Caco-2 (cell line): ENCODE measurements at regions of chr7 and their contacts with region 1.

Region 1: GRCh38 chr7:36440880-36441279 is 51.2 kb downstream of the ANLN start:
- DNase-seq: peak in 1 of 2 experiments; percentile 24
- H3K4me3 ChIP-seq: no peak overlapping the region
- H3K4me3 Mint-ChIP-seq: no peak overlapping the region
- H3K27ac Mint-ChIP-seq: no peak overlapping the region
- H3K4me1 ChIP-seq: peaks cover 13% of the 10 kb centered on the region
- H3K4me1 Mint-ChIP-seq: no peaks in the 10 kb centered on the region
- H3K27me3 ChIP-seq: no peaks in the 10 kb centered on the region
- H3K27me3 Mint-ChIP-seq: no peaks in the 10 kb centered on the region
- CTCF ChIP-seq: peak; percentile 36 to 42

Region 2: DNA sequence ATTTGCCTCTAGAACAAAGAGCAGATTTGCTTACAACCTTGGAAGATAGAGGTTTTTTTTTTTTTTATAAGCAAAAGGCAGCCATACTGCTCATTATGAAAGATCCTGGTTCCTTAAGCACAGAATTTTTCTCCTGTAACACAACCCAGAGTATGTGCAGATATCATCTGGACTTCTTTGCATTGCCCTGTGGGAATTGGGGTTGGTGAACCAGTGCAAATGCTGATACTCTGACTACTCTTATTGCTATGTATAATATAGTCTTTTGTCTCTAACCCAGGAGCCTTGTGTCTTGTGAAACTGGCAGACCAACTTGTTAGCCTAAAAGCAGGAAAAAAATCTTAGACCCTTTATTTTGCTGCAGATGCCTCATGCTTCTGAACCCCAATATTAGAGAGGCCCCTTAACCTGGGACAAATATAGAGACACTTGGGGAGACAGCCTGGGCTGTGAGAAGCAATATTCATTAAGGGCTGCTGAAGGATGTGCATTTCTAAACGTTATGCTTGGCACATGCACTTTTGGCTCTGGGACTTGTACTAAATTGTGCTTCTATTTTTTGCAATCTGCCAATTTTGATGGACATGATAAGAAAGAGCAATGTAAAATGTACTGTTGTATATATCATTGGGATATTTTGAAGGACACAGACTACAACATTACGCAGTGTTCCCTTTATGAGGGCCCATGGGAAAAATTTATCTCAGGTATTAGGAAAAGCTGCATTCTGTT is 27.7 kb after region 1 on chr7:
- CTCF ChIA-PET with region 1: no interaction called
- POLR2A ChIA-PET with region 1: no interaction called
- intact Hi-C with region 1: no loop called
- DNase-seq: no peak
- H3K4me3 ChIP-seq: no peak overlapping the region
- H3K4me3 Mint-ChIP-seq: no peak overlapping the region
- H3K27ac Mint-ChIP-seq: no peak overlapping the region
- H3K4me1 ChIP-seq: no peaks in the 10 kb centered on the region
- H3K4me1 Mint-ChIP-seq: no peaks in the 10 kb centered on the region
- H3K27me3 ChIP-seq: no peaks in the 10 kb centered on the region
- H3K27me3 Mint-ChIP-seq: no peaks in the 10 kb centered on the region
- CTCF ChIP-seq: no peak

Region 3: DNA sequence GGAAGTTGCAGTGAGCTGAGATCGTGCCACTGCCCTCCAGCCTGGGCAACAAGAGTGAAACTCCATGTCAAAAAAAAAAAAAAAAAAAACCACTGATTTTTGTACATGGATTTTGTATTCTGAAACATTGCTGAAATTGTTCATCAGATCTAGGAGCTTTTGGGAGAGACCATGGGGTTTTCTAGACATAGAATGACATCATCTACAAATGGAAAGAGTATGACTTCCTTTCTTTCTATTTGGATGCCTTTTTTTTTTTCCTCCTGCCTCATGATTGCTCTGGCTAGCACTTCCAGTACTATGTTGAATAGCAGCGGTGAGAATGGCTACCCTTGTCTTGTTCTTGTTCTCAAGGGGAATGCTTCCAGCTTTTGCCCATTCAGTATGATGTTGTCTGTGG is 37.9 kb after region 1 on chr7:
- CTCF ChIA-PET with region 1: no interaction called
- POLR2A ChIA-PET with region 1: no interaction called
- intact Hi-C with region 1: no loop called
- DNase-seq: no peak
- H3K4me3 ChIP-seq: no peak overlapping the region
- H3K4me3 Mint-ChIP-seq: no peak overlapping the region
- H3K27ac Mint-ChIP-seq: no peak overlapping the region
- H3K4me1 ChIP-seq: peaks cover under 1% of the 10 kb centered on the region; the same call in 1 of the 2 replicates
- H3K4me1 Mint-ChIP-seq: no peaks in the 10 kb centered on the region
- H3K27me3 ChIP-seq: no peaks in the 10 kb centered on the region
- H3K27me3 Mint-ChIP-seq: no peaks in the 10 kb centered on the region
- CTCF ChIP-seq: no peak

Region 4: GRCh38 chr7:36670585-36671431 is 229.9 kb after region 1 on chr7:
- CTCF ChIA-PET with region 1: interaction called, 5 read pairs
- POLR2A ChIA-PET with region 1: no interaction called
- intact Hi-C with region 1: loop called (anchors 1 kb)
- DNase-seq: peak; percentile 57 to 74
- H3K4me3 ChIP-seq: no peak overlapping the region
- H3K4me3 Mint-ChIP-seq: no peak overlapping the region
- H3K27ac Mint-ChIP-seq: no peak overlapping the region
- H3K4me1 ChIP-seq: no peaks in the 10 kb centered on the region
- H3K4me1 Mint-ChIP-seq: no peaks in the 10 kb centered on the region
- H3K27me3 ChIP-seq: no peaks in the 10 kb centered on the region
- H3K27me3 Mint-ChIP-seq: no peaks in the 10 kb centered on the region
- CTCF ChIP-seq: peak; percentile 78 to 85